AG04450 (cell line): ENCODE measurements at regions of chr10 and their contacts with region 1.

Region 1: DNA sequence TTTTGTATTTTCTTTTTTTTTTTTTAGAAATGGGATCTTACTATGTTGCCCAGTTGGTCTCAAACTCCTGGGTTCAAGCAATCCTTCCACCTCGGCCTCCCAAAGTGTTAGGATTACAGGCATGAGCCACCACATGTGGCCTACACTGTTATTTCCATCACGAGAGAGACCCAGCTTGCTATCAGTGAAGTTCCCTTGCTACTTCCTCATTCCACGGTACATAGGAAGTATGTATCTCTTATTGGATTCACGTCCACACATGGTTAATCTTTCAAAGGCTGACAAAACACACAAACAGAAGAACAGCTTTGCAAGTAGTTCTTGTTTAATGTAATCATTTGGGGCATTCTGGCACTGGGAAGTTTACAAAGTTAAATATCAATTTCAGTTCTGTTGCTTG is 50.9 kb downstream of the DCLRE1A start:
- DNase-seq: no peak
- H3K4me3 ChIP-seq: no peak overlapping the region
- H3K27ac ChIP-seq: no peak overlapping the region
- H3K27me3 ChIP-seq: peaks cover 13% of the 10 kb centered on the region
- CTCF ChIP-seq: no peak

Region 2: GRCh38 chr10:113788604-113789083 is 14.4 kb before region 1 on chr10:
- CTCF ChIA-PET with region 1: interaction called, 15 read pairs
- POLR2A ChIA-PET with region 1: no interaction called
- DNase-seq: peak; percentile 77
- H3K4me3 ChIP-seq: no peak overlapping the region
- H3K27ac ChIP-seq: no peak overlapping the region
- H3K27me3 ChIP-seq: peaks cover 4% of the 10 kb centered on the region
- CTCF ChIP-seq: no peak

Region 3: DNA sequence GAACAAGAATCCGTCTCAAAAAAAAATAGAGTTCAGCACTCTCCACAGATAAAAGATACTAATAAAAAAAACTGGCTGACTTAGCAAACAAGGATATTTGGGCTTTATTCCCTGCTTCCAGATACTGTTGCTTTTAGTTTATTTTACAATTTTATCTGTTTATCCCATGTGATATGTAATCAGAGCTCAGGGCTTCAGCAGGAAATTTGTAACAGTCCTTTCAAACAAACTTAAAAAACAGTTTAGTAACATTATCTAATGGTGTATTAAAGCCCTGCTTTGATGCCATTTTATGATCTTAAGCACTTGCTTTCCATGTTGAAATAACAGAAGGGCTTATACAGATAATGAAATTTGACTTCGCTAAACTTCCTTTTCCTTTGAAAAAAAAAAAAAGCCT is 22.8 kb after region 1 on chr10:
- CTCF ChIA-PET with region 1: interaction called, 10 read pairs
- POLR2A ChIA-PET with region 1: no interaction called
- DNase-seq: peak; percentile 7
- H3K4me3 ChIP-seq: no peak overlapping the region
- H3K27ac ChIP-seq: no peak overlapping the region
- H3K27me3 ChIP-seq: no peaks in the 10 kb centered on the region
- CTCF ChIP-seq: no peak

Region 4: GRCh38 chr10:114103284-114103683 is 300.3 kb after region 1 on chr10:
- CTCF ChIA-PET with region 1: interaction called, 147 read pairs
- POLR2A ChIA-PET with region 1: no interaction called
- DNase-seq: peak; percentile 11
- H3K4me3 ChIP-seq: no peak overlapping the region
- H3K27ac ChIP-seq: no peak overlapping the region
- H3K27me3 ChIP-seq: peaks cover 15% of the 10 kb centered on the region
- CTCF ChIP-seq: peak; percentile 57

Region 5: GRCh38 chr10:114110174-114110972 is 307.4 kb after region 1 on chr10:
- CTCF ChIA-PET with region 1: interaction called, 147 read pairs
- POLR2A ChIA-PET with region 1: no interaction called
- DNase-seq: no peak
- H3K4me3 ChIP-seq: no peak overlapping the region
- H3K27ac ChIP-seq: no peak overlapping the region
- H3K27me3 ChIP-seq: peaks cover 5% of the 10 kb centered on the region
- CTCF ChIP-seq: peak; percentile 23